ENCODE measurements at regions of chr7 and their contacts with region 1.

Region 1: DNA sequence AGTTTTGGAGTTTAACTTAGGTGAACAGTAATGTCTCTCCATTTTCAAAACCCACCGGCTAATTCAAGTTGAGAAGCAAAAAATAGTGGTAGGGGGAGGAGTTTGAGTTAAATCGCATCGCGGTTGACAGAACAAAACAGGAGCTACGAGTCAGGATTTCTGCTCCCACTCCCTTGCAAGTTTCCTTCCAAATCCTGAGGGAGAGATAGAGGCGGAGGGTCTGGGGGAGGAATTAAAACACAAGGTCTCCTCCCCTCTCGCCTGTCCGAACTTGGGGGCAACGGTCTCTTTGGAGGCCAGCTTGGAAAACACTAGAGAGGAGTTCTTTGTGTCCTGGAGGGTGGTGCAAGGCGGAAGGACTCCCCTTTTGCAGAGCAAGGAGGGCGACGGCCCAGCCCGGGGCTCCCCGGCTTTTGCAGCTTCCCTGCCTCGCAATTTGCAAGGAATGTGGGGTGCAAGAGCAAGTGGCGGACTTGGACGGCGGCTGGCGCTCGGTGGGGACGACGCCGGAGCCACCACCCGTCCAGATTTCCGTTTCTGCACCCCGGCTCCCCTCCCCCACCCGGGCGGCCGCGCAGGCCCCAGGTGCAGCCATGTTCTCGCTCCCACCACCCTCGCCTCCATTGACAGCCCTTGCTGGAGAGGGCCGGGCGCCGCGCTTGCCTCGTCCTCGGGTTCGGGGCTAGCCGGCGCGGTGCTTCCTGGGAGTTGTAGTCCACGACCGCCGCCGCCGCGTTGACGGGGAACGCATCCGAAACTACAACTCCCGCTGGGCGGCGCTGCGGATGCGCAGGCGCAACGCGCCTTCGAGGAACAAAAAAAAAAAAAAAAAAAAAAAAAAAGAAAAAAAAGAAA is 454 bp upstream of the GTF2I start:
- DNase-seq: peak; percentile 97
- H3K4me3 Mint-ChIP-seq: peak overlapping the region; percentile 91
- H3K27ac Mint-ChIP-seq: peak overlapping the region; percentile 94
- H3K4me1 Mint-ChIP-seq: peaks cover 44% of the 10 kb centered on the region
- H3K27me3 Mint-ChIP-seq: no peaks in the 10 kb centered on the region

Region 2: GRCh38 chr7:74606101-74606908 is 50.8 kb before region 1 on chr7:
- intact Hi-C with region 1: loop called (anchors 5 kb)
- DNase-seq: peak; percentile 15
- H3K4me3 Mint-ChIP-seq: peak overlapping the region; percentile 61
- H3K27ac Mint-ChIP-seq: no peak overlapping the region
- H3K4me1 Mint-ChIP-seq: peaks cover 4% of the 10 kb centered on the region
- H3K27me3 Mint-ChIP-seq: peaks cover 3% of the 10 kb centered on the region

Measured in activated T-helper 2 cell treated with anti-CD3 and anti-CD28 coated beads, Interferon-gamma antibody, Interleukin-2, Interleukin-4, amounts not matched to agents 10 μg/mL and 5 μg/mL and 100 μg/mL, durations not matched to agents 14 hours and 24 hours and 36 hours (primary cell).